ENCODE measurements at regions of chr12 and their contacts with region 1.

Region 1: DNA sequence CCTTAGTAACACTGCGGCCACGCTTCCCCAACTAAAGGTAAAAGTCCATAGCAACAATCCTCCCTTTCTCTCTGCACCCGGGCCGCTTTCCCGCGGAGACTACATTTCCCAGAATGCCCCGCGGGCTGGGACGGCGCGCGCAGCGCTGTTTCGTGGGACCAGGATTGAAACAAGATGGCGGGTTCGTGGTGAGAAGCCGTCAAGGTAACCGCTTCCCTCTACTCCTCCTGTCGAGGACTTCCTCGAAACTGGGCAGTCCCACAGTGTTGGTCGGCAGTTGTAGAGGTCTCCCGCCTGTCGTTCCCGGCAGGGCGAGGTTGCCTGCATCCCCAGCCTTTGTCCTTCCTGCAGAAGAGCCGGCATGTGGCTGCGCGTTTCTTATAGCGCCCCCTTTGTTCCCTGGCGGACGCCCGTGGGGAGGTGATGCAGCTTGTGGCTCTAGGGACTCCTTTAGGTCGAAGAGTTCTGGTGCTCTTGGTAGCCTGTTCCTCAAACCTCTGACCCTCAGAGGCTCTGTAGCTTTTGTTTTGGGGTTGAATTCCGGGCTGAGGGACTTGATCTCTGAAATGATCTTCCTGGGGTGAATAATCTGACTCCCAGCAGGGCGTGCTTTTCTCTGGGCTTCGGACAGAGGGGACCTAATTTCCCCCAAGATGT is at the start of gene MRPL42:
- DNase-seq: peak; percentile 94 to 95
- ATAC-seq: peak; percentile 94 to 95 (median 95)
- H3K4me3 ChIP-seq: peak within 1 kb of the TSS; percentile 62
- H3K4me3 Mint-ChIP-seq: peak within 1 kb of the TSS; percentile 90
- H3K27ac ChIP-seq: peak within 1 kb of the TSS; percentile 67
- H3K27ac Mint-ChIP-seq: peak within 1 kb of the TSS; percentile 91 to 94
- H3K4me1 ChIP-seq: peaks cover 8% of the 10 kb centered on the region
- H3K4me1 Mint-ChIP-seq: peaks cover 22 to 27% of the 10 kb centered on the region in 2 donors
- H3K27me3 ChIP-seq: no peaks in the 10 kb centered on the region
- H3K27me3 Mint-ChIP-seq: peaks cover 0 to 3% of the 10 kb centered on the region in 2 donors
- CTCF ChIP-seq: peak; percentile 84
- total RNA-seq, gene MRPL42: 36.4 to 42.7 (median 37.1) TPM

Region 2: DNA sequence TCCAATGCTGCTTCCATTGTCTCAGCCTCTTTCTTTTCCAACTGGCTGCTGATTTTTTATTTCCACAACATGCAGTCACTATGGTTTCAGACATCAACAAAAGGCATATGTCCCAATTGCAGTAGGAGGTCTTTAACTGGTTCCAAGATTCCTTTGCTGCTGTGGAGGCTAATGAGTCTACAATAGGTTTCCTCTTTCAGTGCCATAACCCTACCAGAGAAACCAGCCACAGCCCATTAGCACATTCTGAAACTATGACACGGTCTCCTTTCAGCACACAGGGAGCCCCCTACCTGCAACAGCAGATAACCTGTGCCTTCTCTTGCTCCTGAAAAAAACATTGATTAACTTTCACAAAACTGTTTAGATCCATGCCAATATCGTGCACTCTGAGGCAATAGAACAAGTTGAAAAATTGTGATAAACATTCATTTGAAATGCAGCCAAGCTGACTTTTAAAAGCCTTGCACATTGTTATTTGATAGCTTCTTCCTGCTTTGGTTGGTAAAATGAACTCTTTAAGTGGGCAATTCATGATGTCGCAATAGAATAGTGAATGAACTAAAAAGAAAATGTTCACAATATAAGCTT is 732.3 kb before region 1 on chr12:
- intact Hi-C with region 1: no loop called
- DNase-seq: no peak
- ATAC-seq: no peak
- H3K4me3 ChIP-seq: no peak overlapping the region
- H3K4me3 Mint-ChIP-seq: no peak overlapping the region
- H3K27ac ChIP-seq: no peak overlapping the region
- H3K27ac Mint-ChIP-seq: no peak overlapping the region
- H3K4me1 ChIP-seq: no peaks in the 10 kb centered on the region
- H3K4me1 Mint-ChIP-seq: no peaks in the 10 kb centered on the region
- H3K27me3 ChIP-seq: no peaks in the 10 kb centered on the region
- H3K27me3 Mint-ChIP-seq: peaks cover 4 to 13% of the 10 kb centered on the region in 2 donors
- CTCF ChIP-seq: no peak

Region 3: DNA sequence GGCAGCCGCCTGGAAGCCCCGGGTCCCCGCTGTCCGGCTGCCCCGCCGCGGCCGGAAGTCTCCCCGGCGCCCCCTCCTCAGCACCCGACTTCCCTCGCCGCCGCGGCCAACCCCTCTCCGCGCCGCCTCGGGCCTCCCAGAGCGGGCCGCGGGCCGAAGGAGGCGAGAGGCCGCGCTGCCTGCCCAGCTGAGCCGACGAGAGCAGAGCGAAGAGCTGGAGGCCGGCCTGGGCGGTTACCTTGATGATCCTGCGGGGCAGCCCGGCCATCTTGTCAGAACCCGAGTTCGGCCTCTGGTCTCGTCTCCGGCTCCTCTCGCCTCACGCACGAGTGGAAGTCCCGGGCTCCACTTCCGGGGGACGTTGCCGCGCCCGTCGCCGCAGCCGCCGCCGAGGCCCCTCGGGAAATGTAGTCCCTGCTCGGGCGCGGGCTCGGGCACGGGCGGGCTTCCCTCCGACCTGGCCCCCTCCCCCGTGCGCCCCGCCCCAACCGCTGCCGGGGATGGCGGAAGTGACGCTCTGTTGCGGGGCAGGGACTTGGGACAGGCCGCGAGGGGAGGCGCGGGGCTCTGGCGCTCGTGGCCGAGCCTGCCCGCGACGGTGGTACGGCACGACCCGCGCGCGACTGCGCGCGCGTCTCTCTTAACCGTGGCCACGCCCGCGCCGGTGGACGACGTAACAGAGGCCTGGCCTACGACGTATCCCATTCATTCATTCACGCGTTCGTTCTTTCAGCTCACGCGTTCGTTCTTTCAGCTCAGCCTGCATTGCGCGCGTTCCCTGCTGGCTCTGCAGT is 25.7 kb before region 1 on chr12 and contains the start of gene UBE2N:
- intact Hi-C with region 1: loop called (anchors 1 kb)
- DNase-seq: peak; percentile 95 to 96
- ATAC-seq: peak; percentile 86 to 96 (median 87)
- H3K4me3 ChIP-seq: peak within 1 kb of the TSS; percentile 70
- H3K4me3 Mint-ChIP-seq: peak within 1 kb of the TSS; percentile 98
- H3K27ac ChIP-seq: peak within 1 kb of the TSS; percentile 92
- H3K27ac Mint-ChIP-seq: peak within 1 kb of the TSS; percentile 96 to 98
- H3K4me1 ChIP-seq: peaks cover 23% of the 10 kb centered on the region
- H3K4me1 Mint-ChIP-seq: peaks cover 48% of the 10 kb centered on the region in 2 donors
- H3K27me3 ChIP-seq: no peaks in the 10 kb centered on the region
- H3K27me3 Mint-ChIP-seq: no peaks in the 10 kb centered on the region
- CTCF ChIP-seq: no peak
- total RNA-seq, gene UBE2N: 72.3 to 79.7 (median 72.9) TPM

Region 4: GRCh38 chr12:93502802-93503623 is 35.5 kb after region 1 on chr12:
- intact Hi-C with region 1: no loop called
- DNase-seq: peak; percentile 43 to 80
- ATAC-seq: peak; percentile 53 to 66 (median 54)
- H3K4me3 ChIP-seq: no peak overlapping the region
- H3K4me3 Mint-ChIP-seq: no peak overlapping the region
- H3K27ac ChIP-seq: no peak overlapping the region
- H3K27ac Mint-ChIP-seq: no peak overlapping the region
- H3K4me1 ChIP-seq: no peaks in the 10 kb centered on the region
- H3K4me1 Mint-ChIP-seq: peaks cover 5% of the 10 kb centered on the region in 2 donors
- H3K27me3 ChIP-seq: no peaks in the 10 kb centered on the region
- H3K27me3 Mint-ChIP-seq: no peaks in the 10 kb centered on the region
- CTCF ChIP-seq: peak; percentile 88

Region 5: GRCh38 chr12:93514853-93515252 is 47.4 kb after region 1 on chr12:
- intact Hi-C with region 1: no loop called
- DNase-seq: no peak
- ATAC-seq: no peak
- H3K4me3 ChIP-seq: no peak overlapping the region
- H3K4me3 Mint-ChIP-seq: no peak overlapping the region
- H3K27ac ChIP-seq: no peak overlapping the region
- H3K27ac Mint-ChIP-seq: no peak overlapping the region
- H3K4me1 ChIP-seq: no peaks in the 10 kb centered on the region
- H3K4me1 Mint-ChIP-seq: no peaks in the 10 kb centered on the region
- H3K27me3 ChIP-seq: no peaks in the 10 kb centered on the region
- H3K27me3 Mint-ChIP-seq: no peaks in the 10 kb centered on the region
- CTCF ChIP-seq: no peak